ENCODE measurements at regions of chr12 and their contacts with region 1.

Region 1: DNA sequence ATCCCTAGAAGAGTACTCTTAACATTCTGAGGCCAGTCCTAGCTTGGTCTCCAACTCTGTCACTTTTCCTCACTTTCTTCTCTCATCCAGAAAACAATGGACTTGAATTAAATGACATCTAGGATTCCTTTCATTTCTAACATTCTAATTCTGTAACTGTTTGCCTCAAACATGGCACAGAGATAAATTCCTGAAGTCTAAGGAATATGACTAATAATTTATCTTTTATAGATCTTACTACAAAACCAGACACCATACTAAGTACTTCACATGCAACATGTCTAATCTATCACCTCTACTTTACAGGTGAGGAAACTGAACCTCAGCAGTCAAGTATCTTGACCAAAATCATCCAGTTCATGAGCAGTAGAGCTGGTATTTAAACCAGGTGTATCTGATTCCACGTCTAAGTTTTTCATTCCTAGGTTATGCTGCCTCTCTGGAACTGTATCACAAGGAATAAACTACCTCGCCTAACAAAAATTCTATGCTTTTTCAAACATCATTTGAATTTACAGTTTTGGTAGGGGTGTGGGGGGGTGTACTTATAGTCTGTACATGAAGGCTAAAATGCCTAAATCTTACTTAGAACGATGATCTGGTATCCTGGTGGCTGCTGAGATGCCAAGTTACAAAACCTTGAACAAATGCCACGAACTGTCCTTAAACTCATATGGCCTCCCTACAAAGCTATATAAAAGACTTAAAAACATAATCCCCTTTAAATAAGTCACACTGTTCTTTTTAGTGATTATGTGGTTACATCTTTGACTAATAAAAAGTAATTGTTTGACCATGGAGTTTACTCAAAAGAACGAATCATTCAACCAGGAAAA is 41.6 kb downstream of the ATXN2 start:
- DNase-seq: no peak
- ATAC-seq: no peak
- H3K4me3 ChIP-seq: no peak overlapping the region
- H3K4me3 Mint-ChIP-seq: no peak overlapping the region
- H3K27ac ChIP-seq: no peak overlapping the region
- H3K27ac Mint-ChIP-seq: peak overlapping the region in 1 of 2 donors; percentile 6
- H3K4me1 ChIP-seq: no peaks in the 10 kb centered on the region
- H3K4me1 Mint-ChIP-seq: peaks cover 21 to 26% (median 22%) of the 10 kb centered on the region in 3 donors
- H3K27me3 ChIP-seq: no peaks in the 10 kb centered on the region
- H3K27me3 Mint-ChIP-seq: no peaks in the 10 kb centered on the region

Region 2: GRCh38 chr12:111268738-111269572 is 288.5 kb before region 1 on chr12:
- CTCF ChIA-PET with region 1: no interaction called
- POLR2A ChIA-PET with region 1: no interaction called
- DNase-seq: peak in 5 of 35 experiments; percentile 2 to 30 (median 3)
- ATAC-seq: no peak
- H3K4me3 ChIP-seq: no peak overlapping the region
- H3K4me3 Mint-ChIP-seq: no peak overlapping the region
- H3K27ac ChIP-seq: no peak overlapping the region
- H3K27ac Mint-ChIP-seq: no peak overlapping the region
- H3K4me1 ChIP-seq: no peaks in the 10 kb centered on the region
- H3K4me1 Mint-ChIP-seq: peaks cover 0 to 7% (median 0%) of the 10 kb centered on the region in 3 donors
- H3K27me3 ChIP-seq: peaks cover 0 to 12% of the 10 kb centered on the region in 2 experiments
- H3K27me3 Mint-ChIP-seq: peaks cover 5 to 16% of the 10 kb centered on the region in 2 donors

Region 3: DNA sequence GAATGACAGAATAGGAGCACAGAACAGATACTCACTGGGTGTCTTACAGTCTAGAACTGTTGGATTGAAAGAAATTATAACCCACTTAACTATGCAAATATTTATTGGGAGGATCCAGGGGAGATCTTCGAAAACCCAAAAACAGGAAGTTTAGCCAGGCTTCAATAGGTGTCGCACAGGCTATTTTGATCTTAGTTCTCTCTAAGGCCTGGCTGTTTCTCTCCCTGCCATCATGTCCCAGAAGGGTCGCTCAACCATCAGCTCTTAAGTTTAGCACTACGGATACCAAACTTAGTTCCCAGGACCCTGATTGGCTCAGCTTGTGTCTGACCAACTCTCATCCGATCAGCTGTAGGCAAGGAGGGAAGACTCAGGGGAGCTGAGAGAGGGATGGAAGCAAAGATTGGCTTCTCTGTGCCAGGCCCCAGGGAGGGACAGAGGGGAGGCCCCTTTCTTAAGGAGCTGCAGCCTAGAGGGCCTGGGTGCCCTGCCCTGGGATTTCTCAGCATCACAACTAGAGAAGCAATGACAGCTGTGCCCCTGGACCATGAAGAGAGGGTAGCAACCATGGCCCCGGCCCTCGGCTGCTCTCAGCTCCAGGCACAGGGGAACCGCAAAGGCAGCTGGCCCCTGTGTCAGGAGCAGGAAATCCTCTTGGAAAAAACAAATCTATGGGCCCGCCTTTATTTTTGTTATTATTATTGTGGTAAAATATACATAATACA is 202.1 kb before region 1 on chr12:
- CTCF ChIA-PET with region 1: no interaction called
- POLR2A ChIA-PET with region 1: no interaction called
- DNase-seq: no peak
- ATAC-seq: no peak
- H3K4me3 ChIP-seq: no peak overlapping the region
- H3K4me3 Mint-ChIP-seq: no peak overlapping the region
- H3K27ac ChIP-seq: no peak overlapping the region
- H3K27ac Mint-ChIP-seq: no peak overlapping the region
- H3K4me1 ChIP-seq: no peaks in the 10 kb centered on the region
- H3K4me1 Mint-ChIP-seq: peaks cover 5 to 12% (median 5%) of the 10 kb centered on the region in 3 donors
- H3K27me3 ChIP-seq: peaks cover 0 to 11% of the 10 kb centered on the region in 2 experiments
- H3K27me3 Mint-ChIP-seq: peaks cover 3 to 7% of the 10 kb centered on the region in 2 donors

Region 4: DNA sequence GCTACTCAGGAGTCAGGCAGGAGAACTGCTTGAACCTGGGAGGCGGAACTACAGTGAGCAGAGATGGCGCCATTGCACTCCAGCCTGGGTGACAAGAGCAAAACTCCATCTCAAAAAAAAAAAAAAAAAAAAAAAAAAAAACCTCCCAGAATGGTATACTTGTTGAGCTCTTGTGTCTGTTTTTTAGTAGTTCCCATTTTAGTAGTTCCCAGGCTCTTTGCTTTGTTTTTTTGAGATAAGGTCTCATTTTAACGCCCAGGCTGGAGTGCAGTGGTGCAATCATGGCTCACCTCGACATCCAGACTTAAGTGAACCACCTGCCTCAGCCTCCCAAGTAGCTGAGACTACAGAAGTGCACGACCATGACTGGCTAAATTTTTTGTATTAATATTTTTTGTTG is 28.2 kb after region 1 on chr12:
- CTCF ChIA-PET with region 1: interaction called in 1 of 2 experiments, 17 read pairs
- POLR2A ChIA-PET with region 1: no interaction called
- DNase-seq: no peak
- ATAC-seq: no peak
- H3K4me3 ChIP-seq: no peak overlapping the region
- H3K4me3 Mint-ChIP-seq: no peak overlapping the region
- H3K27ac ChIP-seq: no peak overlapping the region
- H3K27ac Mint-ChIP-seq: no peak overlapping the region
- H3K4me1 ChIP-seq: no peaks in the 10 kb centered on the region
- H3K4me1 Mint-ChIP-seq: peaks cover 16 to 33% (median 29%) of the 10 kb centered on the region in 3 donors
- H3K27me3 ChIP-seq: no peaks in the 10 kb centered on the region
- H3K27me3 Mint-ChIP-seq: no peaks in the 10 kb centered on the region

Region 5: DNA sequence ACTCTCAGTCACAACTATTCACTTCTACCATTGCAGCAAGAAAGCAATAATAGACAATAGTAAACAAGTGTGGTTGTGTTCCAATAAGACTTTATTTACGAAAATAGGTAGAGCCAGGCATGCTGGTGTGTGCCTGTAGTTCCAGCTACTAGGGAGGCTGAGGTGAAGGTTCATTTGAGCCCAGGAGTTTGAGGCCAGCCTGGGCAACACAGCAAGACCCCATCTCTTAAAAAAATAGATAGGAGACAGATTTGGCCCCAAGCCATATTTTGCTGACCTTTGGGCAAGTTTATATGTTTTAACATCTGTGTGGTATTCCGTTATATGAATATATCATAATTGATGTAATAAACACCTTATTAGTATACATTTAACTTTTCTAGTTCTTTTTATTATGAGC is 142.5 kb after region 1 on chr12:
- CTCF ChIA-PET with region 1: no interaction called
- POLR2A ChIA-PET with region 1: interaction called in 1 of 2 experiments, 19 read pairs
- DNase-seq: no peak
- ATAC-seq: no peak
- H3K4me3 ChIP-seq: no peak overlapping the region
- H3K4me3 Mint-ChIP-seq: no peak overlapping the region
- H3K27ac ChIP-seq: no peak overlapping the region
- H3K27ac Mint-ChIP-seq: no peak overlapping the region
- H3K4me1 ChIP-seq: no peaks in the 10 kb centered on the region
- H3K4me1 Mint-ChIP-seq: no peaks in the 10 kb centered on the region
- H3K27me3 ChIP-seq: no peaks in the 10 kb centered on the region
- H3K27me3 Mint-ChIP-seq: no peaks in the 10 kb centered on the region